GM12878 (cell line): ENCODE measurements at regions of chr2 and their contacts with region 1.

Region 1: GRCh38 chr2:61694312-61695274 is 156.4 kb upstream of the XPO1 start:
- DNase-seq: peak; percentile 78
- ATAC-seq: peak; percentile 98
- H3K4me3 ChIP-seq: peak overlapping the region; percentile 79
- H3K27ac ChIP-seq: peak overlapping the region; percentile 71
- H3K4me1 ChIP-seq: peaks cover 4% of the 10 kb centered on the region; the same call in 1 of the 2 replicates
- H3K27me3 ChIP-seq: no peaks in the 10 kb centered on the region
- CTCF ChIP-seq: peak; percentile 75 to 78 (median 75)
- EP300 ChIP-seq: no peak
- POLR2A ChIP-seq: peak; percentile 97
- RAD21 ChIP-seq: peak; percentile 50

Region 2: DNA sequence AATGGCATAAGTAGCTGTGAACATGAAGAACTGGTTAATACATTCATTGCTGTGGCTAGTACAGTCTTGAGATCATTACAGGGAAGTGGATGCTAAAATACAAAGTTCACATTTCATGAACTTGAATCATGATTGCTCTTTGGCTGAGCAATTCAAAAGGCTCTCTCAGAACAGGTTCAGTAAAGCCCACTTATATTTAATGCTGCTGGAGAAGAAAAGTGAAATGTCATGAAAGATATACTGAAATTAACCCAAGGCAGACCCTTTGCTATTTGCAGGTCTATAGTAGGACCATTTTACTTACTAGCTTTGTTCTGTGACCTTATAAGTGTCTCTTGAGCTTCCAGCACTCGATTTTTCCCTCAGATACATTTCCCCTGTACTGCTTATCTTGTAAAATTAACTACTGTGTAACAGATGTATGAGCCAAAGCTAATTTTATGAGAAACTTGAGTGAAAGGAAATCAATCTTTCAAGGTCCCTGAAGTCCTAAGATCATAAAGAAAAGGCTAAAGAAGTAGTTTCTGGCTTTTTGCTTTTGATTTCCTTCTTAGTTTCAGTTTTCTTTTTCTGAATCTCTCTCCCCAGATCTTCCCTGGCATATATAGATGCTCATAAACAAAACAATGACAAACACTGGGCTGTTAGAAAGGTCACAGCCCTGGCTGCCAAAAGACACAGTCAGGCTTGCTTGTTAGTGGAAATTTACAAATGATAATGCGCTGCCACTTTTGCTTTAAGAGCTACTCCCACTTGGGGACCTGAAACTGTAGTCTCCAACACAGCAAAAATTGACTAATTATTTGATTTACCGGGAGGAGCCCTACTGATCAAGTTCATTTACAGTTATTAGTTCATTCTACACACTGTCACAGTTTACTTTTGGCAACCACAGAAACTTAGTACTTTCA is 23.7 kb before region 1 on chr2:
- CTCF ChIA-PET with region 1: interaction called, 3 read pairs
- POLR2A ChIA-PET with region 1: interaction called, 4 read pairs
- RAD21 ChIA-PET with region 1: no interaction called
- SMC1A ChIA-PET with region 1: interaction called, 5 read pairs
- in situ Hi-C with region 1: no loop called
- intact Hi-C with region 1: loop called (anchors 1 kb)
- DNase-seq: peak; percentile 46
- ATAC-seq: peak; percentile 89
- H3K4me3 ChIP-seq: peak overlapping the region; percentile 56
- H3K27ac ChIP-seq: peak overlapping the region; percentile 82
- H3K4me1 ChIP-seq: peaks cover 16% of the 10 kb centered on the region; the same call in 1 of the 2 replicates
- H3K27me3 ChIP-seq: no peaks in the 10 kb centered on the region
- CTCF ChIP-seq: no peak
- EP300 ChIP-seq: no peak
- POLR2A ChIP-seq: no peak
- RAD21 ChIP-seq: no peak

Region 3: DNA sequence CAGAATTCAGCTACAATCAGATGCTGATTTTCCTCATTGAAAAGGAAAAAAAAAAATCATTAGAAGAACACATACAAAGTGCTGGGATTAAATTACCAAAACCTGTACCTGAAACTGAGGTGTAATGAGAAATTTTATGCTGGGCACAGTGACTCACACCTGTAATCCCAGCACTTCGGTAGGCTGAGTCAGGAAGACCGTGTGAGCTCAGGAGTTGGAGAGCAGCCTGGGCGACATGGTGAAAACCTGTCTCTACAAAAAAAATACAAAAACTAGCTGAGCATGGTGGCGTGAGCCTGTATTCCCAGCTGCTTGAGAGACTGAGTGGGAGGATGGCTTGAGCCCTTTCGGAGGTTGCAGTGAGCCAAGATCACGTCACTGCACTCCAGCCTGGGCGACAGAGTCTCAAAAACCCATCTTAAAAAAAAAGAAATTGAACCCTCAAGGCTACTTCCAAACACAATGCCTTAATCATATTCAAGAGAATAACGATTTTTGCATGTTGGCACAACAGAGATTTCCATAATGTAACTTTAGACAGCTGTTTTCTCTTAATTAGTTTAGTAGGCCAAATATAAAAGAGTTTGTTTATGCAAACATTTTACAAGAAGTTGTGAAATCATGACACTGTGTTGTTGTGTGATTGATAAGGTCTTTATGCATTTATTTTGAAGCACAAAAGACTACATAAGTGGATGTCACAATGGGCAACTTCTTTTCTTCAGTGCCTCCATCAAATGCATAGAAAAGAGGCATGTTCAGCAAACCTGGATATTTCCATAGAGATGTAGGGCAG is 95.4 kb after region 1 on chr2:
- CTCF ChIA-PET with region 1: interaction called, 3 read pairs
- POLR2A ChIA-PET with region 1: no interaction called
- RAD21 ChIA-PET with region 1: no interaction called
- SMC1A ChIA-PET with region 1: interaction called, 5 read pairs
- in situ Hi-C with region 1: no loop called
- intact Hi-C with region 1: loop called (anchors 5 kb)
- DNase-seq: no peak
- ATAC-seq: no peak
- H3K4me3 ChIP-seq: no peak overlapping the region
- H3K27ac ChIP-seq: no peak overlapping the region
- H3K4me1 ChIP-seq: peaks cover 4% of the 10 kb centered on the region; the same call in 1 of the 2 replicates
- H3K27me3 ChIP-seq: no peaks in the 10 kb centered on the region
- CTCF ChIP-seq: no peak
- EP300 ChIP-seq: no peak
- POLR2A ChIP-seq: no peak
- RAD21 ChIP-seq: no peak

Region 4: GRCh38 chr2:61888267-61889055 is 193.9 kb after region 1 on chr2 and contains the start of gene CCT4:
- CTCF ChIA-PET with region 1: no interaction called
- POLR2A ChIA-PET with region 1: interaction called, 7 read pairs
- RAD21 ChIA-PET with region 1: no interaction called
- SMC1A ChIA-PET with region 1: no interaction called
- in situ Hi-C with region 1: no loop called
- intact Hi-C with region 1: loop called (anchors 10 kb)
- DNase-seq: peak; percentile 72
- ATAC-seq: peak; percentile 90
- H3K4me3 ChIP-seq: peak within 1 kb of the TSS; percentile 78
- H3K27ac ChIP-seq: peak within 1 kb of the TSS; percentile 86
- H3K4me1 ChIP-seq: peaks cover 3% of the 10 kb centered on the region; the same call in 1 of the 2 replicates
- H3K27me3 ChIP-seq: no peaks in the 10 kb centered on the region
- CTCF ChIP-seq: no peak
- EP300 ChIP-seq: peak; percentile 23 to 44; a peak in 1 of 4 replicates
- POLR2A ChIP-seq: peak; percentile 99
- RAD21 ChIP-seq: no peak
- polyA plus RNA-seq, gene CCT4: 76.6 to 179 TPM